ENCODE measurements at regions of chr10 and their contacts with region 1.

Region 1: DNA sequence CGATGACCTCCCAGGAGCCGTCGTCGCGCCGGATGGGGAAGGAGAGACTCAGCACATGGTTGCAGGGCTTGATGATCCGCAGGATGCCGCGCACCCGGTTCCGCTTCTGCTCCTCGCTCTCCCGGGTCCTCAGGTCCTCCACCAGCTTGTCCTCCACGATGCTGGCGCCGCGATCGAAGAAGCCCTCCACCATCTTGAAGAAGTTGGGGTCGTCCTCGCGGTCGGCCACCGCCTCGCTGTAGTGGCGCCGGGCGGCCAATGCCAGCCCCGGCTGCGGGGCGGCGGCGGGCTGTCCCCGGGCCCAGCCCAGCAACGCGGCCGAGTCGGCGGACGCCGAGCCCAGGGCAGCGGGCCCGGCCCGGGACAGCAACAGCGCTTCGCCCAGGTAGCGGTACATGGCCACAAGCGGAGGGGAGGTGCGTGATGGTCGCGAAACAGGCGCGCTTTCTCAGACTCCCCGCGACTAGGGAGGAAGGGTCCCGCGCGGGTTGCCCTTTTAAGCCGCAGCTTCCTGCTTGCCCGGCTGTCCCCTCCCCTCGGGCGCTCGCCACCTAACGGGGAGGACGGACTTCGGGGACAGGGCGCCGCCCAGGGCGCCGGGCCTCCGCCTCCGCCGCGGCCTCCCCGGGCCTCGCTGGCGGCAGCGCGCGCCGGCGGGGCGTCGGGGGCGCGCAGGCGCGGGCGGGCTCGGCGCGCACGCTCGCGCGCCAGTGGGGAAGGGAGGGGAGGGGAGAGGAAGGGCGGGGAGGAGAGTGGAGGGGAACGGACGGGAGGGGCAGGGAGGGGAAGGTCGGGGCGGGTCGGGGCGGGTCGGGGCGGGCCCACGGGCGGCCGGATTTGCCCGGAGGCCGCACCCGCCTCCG is at the starts of genes GLUD1 and SHLD2:
- DNase-seq: peak; percentile 73 to 94 (median 86)
- ATAC-seq: peak; percentile 65
- H3K4me3 ChIP-seq: peak within 1 kb of the TSS; percentile 70 to 71
- H3K4me3 Mint-ChIP-seq: peak within 1 kb of the TSS; percentile 95
- H3K27ac ChIP-seq: peak within 1 kb of the TSS; percentile 84 to 85
- H3K27ac Mint-ChIP-seq: peak within 1 kb of the TSS; percentile 96
- H3K4me1 ChIP-seq: peaks cover 40% of the 10 kb centered on the region
- H3K4me1 Mint-ChIP-seq: peaks cover 64% of the 10 kb centered on the region
- H3K27me3 ChIP-seq: no peaks in the 10 kb centered on the region
- H3K27me3 Mint-ChIP-seq: no peaks in the 10 kb centered on the region
- CTCF ChIP-seq: no peak
- total RNA-seq, gene GLUD1: 69.5 to 70.5 TPM
- total RNA-seq, gene SHLD2: 16.3 to 16.6 TPM

Region 2: GRCh38 chr10:86710987-86711512 is 383.6 kb before region 1 on chr10:
- CTCF ChIA-PET with region 1: no interaction called
- POLR2A ChIA-PET with region 1: no interaction called
- intact Hi-C with region 1: loop called (anchors 1 to 5 kb)
- DNase-seq: peak; percentile 74 to 92 (median 82)
- ATAC-seq: peak; percentile 91
- H3K4me3 ChIP-seq: peak overlapping the region; percentile 48 to 66
- H3K4me3 Mint-ChIP-seq: peak overlapping the region; percentile 88
- H3K27ac ChIP-seq: peak overlapping the region; percentile 74 to 81
- H3K27ac Mint-ChIP-seq: peak overlapping the region; percentile 96
- H3K4me1 ChIP-seq: peaks cover 15% of the 10 kb centered on the region
- H3K4me1 Mint-ChIP-seq: peaks cover 13% of the 10 kb centered on the region
- H3K27me3 ChIP-seq: no peaks in the 10 kb centered on the region
- H3K27me3 Mint-ChIP-seq: no peaks in the 10 kb centered on the region
- CTCF ChIP-seq: peak; percentile 67

Region 3: DNA sequence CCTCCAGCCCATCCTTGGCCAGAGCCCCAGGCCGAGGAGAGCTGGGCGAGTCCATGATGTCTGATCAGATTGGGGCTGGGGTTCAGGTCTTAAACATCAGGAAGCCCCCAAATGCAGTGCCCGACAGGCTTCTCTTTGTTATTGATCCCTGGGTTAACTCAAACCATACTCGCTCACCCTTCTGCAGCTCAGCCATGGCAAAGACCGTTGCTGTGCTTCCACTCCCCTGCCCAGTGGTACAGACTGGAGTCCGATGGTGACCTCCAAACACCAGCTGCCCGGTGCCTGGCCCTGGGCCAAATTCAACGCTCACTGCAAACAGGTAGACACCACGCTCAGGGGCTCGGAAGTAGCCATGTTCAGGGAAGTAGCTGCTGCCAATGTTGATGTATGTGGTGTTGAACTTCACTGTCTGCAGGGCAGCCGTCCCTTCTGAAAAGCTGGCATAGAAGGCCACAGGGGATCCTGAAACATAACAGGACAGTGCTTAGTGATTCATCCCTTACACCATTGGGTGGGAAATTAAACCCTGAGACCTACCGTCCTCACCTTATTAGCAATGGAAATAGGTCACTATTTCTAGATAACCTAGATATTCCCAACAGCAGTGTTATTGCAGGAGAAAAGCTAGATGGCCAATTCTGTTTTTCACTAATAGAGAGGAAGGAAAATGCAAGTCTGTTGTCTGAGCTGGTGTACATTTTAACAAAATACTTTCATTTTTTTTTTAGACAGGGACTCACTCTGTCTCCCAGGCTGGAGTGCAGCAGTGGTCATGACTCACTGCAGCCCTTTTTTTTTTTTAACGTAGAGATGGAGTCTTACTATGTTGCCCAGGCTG is 157.7 kb before region 1 on chr10:
- CTCF ChIA-PET with region 1: no interaction called
- POLR2A ChIA-PET with region 1: interaction called, 3 read pairs
- intact Hi-C with region 1: loop called in 1 of 2 experiments (anchors 1 kb)
- DNase-seq: no peak
- ATAC-seq: no peak
- H3K4me3 ChIP-seq: no peak overlapping the region
- H3K4me3 Mint-ChIP-seq: no peak overlapping the region
- H3K27ac ChIP-seq: no peak overlapping the region
- H3K27ac Mint-ChIP-seq: no peak overlapping the region
- H3K4me1 ChIP-seq: no peaks in the 10 kb centered on the region
- H3K4me1 Mint-ChIP-seq: no peaks in the 10 kb centered on the region
- H3K27me3 ChIP-seq: no peaks in the 10 kb centered on the region
- H3K27me3 Mint-ChIP-seq: no peaks in the 10 kb centered on the region
- CTCF ChIP-seq: no peak

Region 4: DNA sequence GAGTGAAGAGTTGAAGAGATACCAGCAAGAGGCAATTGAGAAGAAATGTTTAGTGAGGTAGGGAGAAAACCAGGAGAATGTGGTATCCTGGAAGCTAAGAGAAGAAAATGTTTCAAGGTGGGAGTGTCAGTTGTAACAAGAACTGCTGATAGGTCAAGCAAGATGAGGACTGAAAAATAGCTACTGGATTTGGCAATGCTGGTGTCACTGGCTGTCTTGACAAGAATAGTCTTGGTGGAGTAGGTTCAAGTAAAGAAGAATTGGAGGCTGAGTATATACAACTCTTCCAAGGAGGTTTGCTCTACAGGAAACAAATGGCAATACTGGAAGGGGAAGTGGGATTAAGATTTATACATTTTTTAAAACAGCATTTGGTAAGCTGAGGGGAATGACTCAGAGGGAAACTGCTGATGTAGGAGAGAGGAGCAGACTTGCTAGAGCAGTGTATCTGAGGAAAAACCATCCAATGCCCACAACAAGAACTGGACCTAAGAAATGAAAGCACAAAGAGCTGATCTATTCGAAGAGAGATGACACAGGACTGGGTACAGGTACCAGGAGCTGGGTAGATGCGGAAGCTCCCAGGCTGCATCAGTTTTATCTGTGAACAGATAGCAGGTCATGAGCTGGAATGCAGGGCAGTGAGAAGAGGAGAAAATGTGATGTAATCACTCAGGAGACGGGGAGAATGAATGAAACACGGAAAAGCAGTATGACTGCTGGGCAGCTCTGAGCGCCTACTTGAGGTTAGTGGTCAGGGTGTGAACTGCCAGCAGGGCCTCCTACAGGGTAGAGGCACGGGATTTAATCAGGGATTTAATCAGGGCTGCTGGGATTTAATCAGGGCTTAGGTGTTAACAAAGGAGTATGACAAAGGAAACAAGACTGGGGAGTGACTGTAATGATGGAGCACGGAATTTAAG is 40.0 kb before region 1 on chr10:
- CTCF ChIA-PET with region 1: no interaction called
- POLR2A ChIA-PET with region 1: no interaction called
- intact Hi-C with region 1: loop called (anchors 1 to 5 kb)
- DNase-seq: no peak
- ATAC-seq: no peak
- H3K4me3 ChIP-seq: no peak overlapping the region
- H3K4me3 Mint-ChIP-seq: no peak overlapping the region
- H3K27ac ChIP-seq: no peak overlapping the region
- H3K27ac Mint-ChIP-seq: no peak overlapping the region
- H3K4me1 ChIP-seq: no peaks in the 10 kb centered on the region
- H3K4me1 Mint-ChIP-seq: no peaks in the 10 kb centered on the region
- H3K27me3 ChIP-seq: no peaks in the 10 kb centered on the region
- H3K27me3 Mint-ChIP-seq: no peaks in the 10 kb centered on the region
- CTCF ChIP-seq: no peak

Region 5: DNA sequence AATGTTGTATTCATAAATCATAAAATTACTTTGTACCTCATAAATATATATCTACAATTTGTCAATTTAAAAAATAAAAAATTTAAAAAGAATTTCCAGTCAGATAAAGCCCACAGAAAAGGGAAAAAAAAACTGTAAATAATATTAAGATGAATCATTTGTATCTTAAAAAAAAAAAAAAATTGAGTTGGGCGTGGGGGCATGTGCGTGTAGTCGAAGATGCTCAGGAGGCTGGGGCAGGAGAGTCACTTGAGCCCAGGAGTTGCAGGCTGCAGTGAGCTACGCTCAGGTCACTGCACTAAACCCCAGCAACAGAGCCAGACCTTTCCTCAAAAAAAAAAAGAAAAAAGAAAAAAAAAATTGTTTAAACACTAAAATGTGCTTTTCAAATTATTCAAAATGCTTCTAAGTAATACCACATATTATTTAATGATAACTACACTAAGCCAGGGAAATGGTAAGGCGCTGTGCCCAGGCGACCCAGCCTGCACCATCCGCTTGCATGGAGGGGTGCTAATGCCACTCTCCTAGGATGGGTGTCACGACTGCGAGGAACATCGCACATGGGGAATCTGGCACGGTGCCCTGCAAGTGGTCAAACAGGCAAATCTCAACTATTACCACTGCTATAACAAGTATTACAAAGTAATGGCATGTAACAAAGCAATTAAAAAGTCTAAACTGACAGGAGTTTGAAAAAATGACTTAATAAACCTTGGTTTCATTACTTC is 15.3 kb before region 1 on chr10:
- CTCF ChIA-PET with region 1: no interaction called
- POLR2A ChIA-PET with region 1: no interaction called
- intact Hi-C with region 1: no loop called
- DNase-seq: no peak
- ATAC-seq: no peak
- H3K4me3 ChIP-seq: no peak overlapping the region
- H3K4me3 Mint-ChIP-seq: no peak overlapping the region
- H3K27ac ChIP-seq: no peak overlapping the region
- H3K27ac Mint-ChIP-seq: no peak overlapping the region
- H3K4me1 ChIP-seq: peaks cover 6% of the 10 kb centered on the region
- H3K4me1 Mint-ChIP-seq: peaks cover 30% of the 10 kb centered on the region
- H3K27me3 ChIP-seq: no peaks in the 10 kb centered on the region
- H3K27me3 Mint-ChIP-seq: no peaks in the 10 kb centered on the region
- CTCF ChIP-seq: no peak